CD8-positive, alpha-beta T cell (primary cell): ENCODE measurements at regions of chr21 and their contacts with region 1.

Region 1: DNA sequence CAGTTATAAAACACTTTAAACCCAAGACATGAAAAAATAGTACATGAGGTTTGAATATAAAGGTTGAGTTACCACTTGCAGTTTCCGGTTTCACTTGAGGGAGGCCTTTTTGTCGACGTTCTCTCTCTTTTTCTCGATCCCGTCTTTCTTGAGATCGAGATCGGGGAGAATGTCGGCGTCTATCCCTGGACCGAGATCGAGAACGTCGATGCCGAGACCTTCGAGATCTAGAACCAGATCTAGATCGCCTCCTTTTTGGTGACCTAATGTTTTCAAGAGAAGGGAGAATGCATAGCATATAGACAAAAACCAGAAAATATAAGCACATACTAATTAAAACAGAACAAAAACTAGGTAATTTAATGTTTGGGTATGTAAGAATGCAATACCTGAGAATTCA is 33.7 kb downstream of the SOD1 start:
- DNase-seq: no peak
- ATAC-seq: no peak
- H3K4me3 ChIP-seq: no peak overlapping the region
- H3K4me3 Mint-ChIP-seq: no peak overlapping the region
- H3K27ac ChIP-seq: no peak overlapping the region
- H3K27ac Mint-ChIP-seq: no peak overlapping the region
- H3K4me1 ChIP-seq: no peaks in the 10 kb centered on the region
- H3K4me1 Mint-ChIP-seq: no peaks in the 10 kb centered on the region
- H3K27me3 ChIP-seq: no peaks in the 10 kb centered on the region
- H3K27me3 Mint-ChIP-seq: no peaks in the 10 kb centered on the region
- CTCF ChIP-seq: no peak

Region 2: DNA sequence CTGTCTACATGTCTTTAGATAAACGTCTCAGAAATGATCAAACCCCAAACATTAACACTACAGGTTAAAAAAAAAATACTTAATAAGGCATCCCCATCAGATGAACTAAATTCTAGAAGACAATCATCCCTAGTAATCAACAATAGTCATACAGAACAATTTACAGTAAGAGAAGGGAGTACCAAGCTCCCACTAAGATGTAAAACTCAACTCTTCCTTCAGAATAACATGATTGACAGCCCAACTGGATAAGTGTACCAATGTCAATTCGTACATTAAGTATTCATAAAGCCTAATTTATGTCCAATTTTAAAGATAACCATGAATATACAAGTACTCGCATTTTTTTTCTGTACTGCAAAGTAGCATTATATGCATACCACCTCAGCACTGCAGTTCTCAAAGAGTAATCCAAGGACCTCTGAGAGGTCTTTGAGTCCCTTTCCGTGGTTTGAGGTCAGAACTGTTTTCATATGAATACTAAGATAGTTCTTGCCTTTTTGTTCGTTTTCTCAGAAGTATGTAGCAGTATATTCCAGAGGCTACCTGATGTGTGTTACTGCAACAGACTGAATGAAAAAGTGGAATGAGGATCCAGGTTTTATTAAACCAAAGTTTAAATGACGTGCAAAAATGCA is 32.1 kb after region 1 on chr21:
- CTCF ChIA-PET with region 1: no interaction called
- POLR2A ChIA-PET with region 1: no interaction called
- intact Hi-C with region 1: loop called in 1 of 2 experiments (anchors 5 kb)
- DNase-seq: no peak
- ATAC-seq: no peak
- H3K4me3 ChIP-seq: no peak overlapping the region
- H3K4me3 Mint-ChIP-seq: no peak overlapping the region
- H3K27ac ChIP-seq: no peak overlapping the region
- H3K27ac Mint-ChIP-seq: no peak overlapping the region
- H3K4me1 ChIP-seq: peaks cover 69% of the 10 kb centered on the region
- H3K4me1 Mint-ChIP-seq: peaks cover 64% of the 10 kb centered on the region
- H3K27me3 ChIP-seq: no peaks in the 10 kb centered on the region
- H3K27me3 Mint-ChIP-seq: no peaks in the 10 kb centered on the region
- CTCF ChIP-seq: no peak